Psoas muscle (tissue), 8 donors: ENCODE measurements at regions of chrX and their contacts with region 1.

Region 1: DNA sequence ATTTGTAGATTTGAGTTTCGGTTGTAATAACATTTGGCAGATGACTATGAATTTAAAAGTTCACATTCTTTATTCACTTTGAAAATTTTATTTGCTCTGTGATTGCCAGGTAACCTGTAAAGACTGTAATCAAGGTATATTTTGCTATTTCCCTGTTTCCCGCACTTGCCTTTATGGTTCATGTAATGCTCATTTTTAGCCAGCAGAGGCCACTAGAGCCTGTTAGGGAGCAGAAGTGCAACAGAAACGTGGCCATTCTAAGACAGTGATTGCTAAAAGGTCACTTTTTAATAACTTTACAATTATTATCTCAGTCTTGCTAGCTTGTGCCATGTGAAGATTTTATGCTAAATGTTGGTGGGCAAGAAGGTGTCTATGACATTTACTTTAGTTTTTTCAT is 12.4 kb downstream of the YIPF6 start:
- DNase-seq: no peak
- ATAC-seq: peak in 3 of 4 donors; percentile 42 to 74 (median 68)
- H3K4me3 ChIP-seq: no peak overlapping the region
- H3K27ac ChIP-seq: no peak overlapping the region
- H3K4me1 ChIP-seq: peaks cover 9% of the 10 kb centered on the region
- H3K27me3 ChIP-seq: no peaks in the 10 kb centered on the region
- CTCF ChIP-seq: peak; percentile 88

Region 2: GRCh38 chrX:68532831-68533533 is 21.7 kb after region 1 on chrX:
- intact Hi-C with region 1: loop called in 1 of 2 experiments (anchors 1 kb)
- DNase-seq: no peak
- ATAC-seq: peak; percentile 51 to 80 (median 62)
- H3K4me3 ChIP-seq: no peak overlapping the region
- H3K27ac ChIP-seq: peak overlapping the region; percentile 46
- H3K4me1 ChIP-seq: peaks cover 3% of the 10 kb centered on the region
- H3K27me3 ChIP-seq: peaks cover 0 to 9% (median 0%) of the 10 kb centered on the region in 3 donors
- CTCF ChIP-seq: no peak

Region 3: GRCh38 chrX:68699960-68700746 is 188.9 kb after region 1 on chrX:
- intact Hi-C with region 1: loop called in 1 of 2 experiments (anchors 10 kb)
- DNase-seq: no peak
- ATAC-seq: peak; percentile 74 to 88 (median 82)
- H3K4me3 ChIP-seq: no peak overlapping the region
- H3K27ac ChIP-seq: peak overlapping the region; percentile 75
- H3K4me1 ChIP-seq: peaks cover 30% of the 10 kb centered on the region
- H3K27me3 ChIP-seq: peaks cover 0 to 10% (median 0%) of the 10 kb centered on the region in 3 donors
- CTCF ChIP-seq: no peak

Region 4: DNA sequence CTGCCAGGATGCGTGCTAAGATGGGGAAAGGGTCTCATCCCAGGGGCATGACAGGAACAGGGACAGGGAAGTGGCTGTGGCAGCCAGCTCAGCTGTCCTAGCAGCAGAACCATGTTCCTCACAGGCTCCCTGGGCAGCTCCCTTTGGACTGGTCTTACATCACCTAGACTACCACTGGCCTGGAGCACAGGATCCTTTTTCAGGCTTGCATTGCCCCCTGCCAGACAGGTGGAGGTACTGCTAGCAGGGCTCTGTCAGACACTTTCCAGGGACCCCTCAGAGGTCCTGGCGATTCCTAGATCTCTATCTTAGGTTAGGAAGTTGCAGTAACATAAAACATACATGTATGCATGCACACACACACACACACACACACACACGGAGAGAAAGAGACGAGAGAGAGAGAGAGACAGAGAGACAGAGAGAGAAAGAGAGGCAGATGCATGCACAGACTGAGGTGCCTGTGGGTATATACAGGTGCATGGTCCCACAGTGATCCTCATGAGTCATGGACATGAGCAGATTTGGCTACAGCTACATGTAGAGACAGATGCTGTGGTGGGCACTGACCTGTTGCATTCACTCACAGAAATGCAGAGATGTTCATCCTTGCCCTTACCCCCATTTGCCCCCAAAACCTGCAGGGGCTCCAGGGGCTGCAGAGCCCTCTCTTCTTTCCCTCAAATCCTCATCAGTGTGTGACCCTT is 199.8 kb after region 1 on chrX:
- intact Hi-C with region 1: loop called (anchors 5 to 10 kb)
- DNase-seq: peak; percentile 28 to 61
- ATAC-seq: peak; percentile 66 to 82 (median 78)
- H3K4me3 ChIP-seq: no peak overlapping the region
- H3K27ac ChIP-seq: no peak overlapping the region
- H3K4me1 ChIP-seq: peaks cover 24% of the 10 kb centered on the region
- H3K27me3 ChIP-seq: peaks cover 0 to 18% (median 0%) of the 10 kb centered on the region in 3 donors
- CTCF ChIP-seq: peak; percentile 60

Region 5: DNA sequence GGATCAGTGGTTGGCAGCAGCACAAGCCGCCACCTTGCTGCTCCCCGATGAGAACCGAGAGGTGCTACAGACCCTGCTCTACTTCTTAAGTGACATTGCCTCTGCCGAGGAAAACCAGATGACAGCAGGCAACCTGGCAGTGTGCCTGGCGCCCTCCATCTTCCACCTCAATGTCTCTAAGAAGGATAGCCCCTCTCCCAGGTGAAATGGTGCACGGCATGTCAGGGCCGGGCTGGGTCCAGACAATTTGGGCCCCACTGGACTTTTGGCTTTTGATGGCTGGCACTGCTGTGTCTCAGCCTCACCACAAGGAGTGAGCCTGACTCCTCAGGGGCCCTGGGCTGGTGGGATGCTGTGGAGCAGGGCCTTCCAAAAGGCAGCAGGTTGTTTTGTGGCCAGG is 210.3 kb after region 1 on chrX:
- intact Hi-C with region 1: no loop called
- DNase-seq: no peak
- ATAC-seq: no peak
- H3K4me3 ChIP-seq: no peak overlapping the region
- H3K27ac ChIP-seq: no peak overlapping the region
- H3K4me1 ChIP-seq: no peaks in the 10 kb centered on the region
- H3K27me3 ChIP-seq: peaks cover 0 to 7% (median 0%) of the 10 kb centered on the region in 3 donors
- CTCF ChIP-seq: no peak

Region 6: DNA sequence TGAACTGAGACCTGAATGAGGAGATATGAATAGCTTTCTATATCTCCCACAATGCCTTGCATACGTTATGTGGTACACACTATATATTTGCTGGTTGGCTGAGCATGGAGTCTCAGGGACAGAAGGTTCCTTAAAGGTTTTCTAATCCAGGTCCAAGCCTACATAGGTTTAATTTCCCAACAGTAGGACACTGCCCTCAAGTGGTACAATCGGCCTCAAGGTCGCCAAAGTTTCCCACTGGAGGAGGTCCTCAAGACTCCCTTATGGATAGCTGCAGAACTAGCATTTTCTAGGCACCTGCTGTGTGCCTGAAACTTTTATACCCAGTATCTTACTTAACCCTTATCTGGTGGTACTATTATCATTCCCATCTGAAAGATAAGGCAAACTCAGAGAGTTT is 296.6 kb after region 1 on chrX:
- intact Hi-C with region 1: loop called (anchors 5 to 10 kb)
- DNase-seq: no peak
- ATAC-seq: no peak
- H3K4me3 ChIP-seq: no peak overlapping the region
- H3K27ac ChIP-seq: no peak overlapping the region
- H3K4me1 ChIP-seq: no peaks in the 10 kb centered on the region
- H3K27me3 ChIP-seq: peaks cover 0 to 35% (median 0%) of the 10 kb centered on the region in 3 donors
- CTCF ChIP-seq: peak; percentile 33